Activated B cell treated with CpG ODN at 0.5 μM for 24 hours (primary cell): ENCODE measurements at regions of chr1 and their contacts with region 1.

Region 1: DNA sequence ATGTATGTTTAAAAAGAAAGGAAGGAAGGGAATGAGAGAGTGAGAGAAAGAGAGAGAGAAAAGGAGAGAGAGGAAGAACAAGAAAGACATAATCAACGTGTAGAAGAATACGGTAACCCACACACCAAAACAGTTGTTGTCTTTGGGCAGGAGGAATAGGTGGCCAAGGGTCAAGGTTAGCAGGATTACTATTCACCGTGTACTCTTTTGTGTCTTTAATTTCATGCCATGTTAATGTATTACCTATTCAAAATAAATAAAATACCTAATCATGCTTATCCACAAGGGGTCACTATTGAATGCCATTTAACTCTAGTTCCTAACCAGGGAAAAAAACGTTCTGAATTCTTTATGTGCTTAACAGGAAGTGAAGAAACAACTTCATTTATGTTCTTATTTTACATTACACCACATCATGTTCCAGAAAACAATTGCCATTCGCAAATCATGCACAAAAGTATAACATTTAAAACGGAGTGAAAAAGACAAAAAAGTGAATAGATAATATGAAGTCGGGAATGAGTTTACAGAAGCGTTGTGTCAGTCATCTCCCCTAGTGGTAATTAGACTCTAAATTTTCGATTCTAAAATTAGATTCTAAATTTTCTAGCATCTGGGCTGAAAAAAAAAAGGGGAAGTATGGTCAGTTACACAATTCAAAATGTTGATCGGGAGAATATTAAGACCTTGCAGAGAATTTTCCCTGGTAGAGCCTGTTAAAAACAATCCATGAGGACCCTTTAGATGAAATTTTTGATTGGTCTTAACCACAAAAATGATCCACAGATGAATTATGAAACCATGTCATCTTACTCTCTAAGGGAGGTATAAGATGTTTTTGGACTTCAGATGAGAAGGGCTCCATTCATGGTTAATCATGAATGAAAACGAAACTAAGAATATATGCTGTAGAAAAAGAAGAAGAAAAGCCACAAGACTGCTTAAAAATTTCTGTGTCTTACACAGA is 700 bp upstream of the KMO start:
- DNase-seq: no peak
- ATAC-seq: peak; percentile 66
- H3K4me3 Mint-ChIP-seq: peak overlapping the region; percentile 91
- H3K27ac Mint-ChIP-seq: peak overlapping the region; percentile 98
- H3K4me1 Mint-ChIP-seq: peaks cover 43% of the 10 kb centered on the region
- H3K27me3 Mint-ChIP-seq: no peaks in the 10 kb centered on the region
- CTCF ChIP-seq: no peak

Region 2: DNA sequence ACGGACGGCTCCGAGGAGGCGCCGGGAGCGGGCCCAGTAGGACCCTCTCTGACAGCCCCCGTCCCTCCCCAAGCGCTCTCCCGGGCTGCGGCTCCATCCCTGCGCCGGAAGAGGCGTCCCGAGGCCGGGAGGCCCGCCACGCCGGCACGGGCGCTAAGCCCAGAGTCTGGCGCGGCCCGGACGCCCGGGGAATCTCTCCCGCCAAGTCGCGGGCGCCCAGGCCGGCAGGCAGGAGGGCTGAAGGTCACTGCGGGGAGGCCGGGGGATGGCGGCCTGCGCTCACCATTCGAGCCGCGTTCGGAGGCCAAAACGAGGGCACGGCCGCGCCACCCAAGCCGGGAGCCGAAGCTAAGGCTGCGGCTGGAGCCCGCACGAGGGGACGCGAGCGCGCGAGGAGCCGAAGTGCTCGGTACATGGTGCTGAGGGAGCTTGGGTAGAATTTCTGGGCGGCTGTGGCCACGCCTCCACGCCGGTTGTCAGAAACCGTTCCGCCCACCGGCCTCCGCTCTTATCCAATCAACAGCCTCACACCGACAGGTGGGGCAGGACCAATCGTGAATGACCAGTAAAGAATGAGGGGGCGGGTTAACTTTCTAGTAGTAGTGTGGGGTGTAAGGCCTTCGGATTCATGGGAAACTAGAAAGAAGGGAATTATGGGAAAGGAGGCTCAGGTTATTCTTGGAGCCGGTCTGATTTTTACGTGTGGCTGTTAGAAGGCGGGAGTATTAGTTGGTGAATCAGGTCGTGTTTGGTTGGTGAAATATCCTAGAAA is 12.0 kb before region 1 on chr1 and contains the start of gene FH:
- CTCF ChIA-PET with region 1: interaction called, 3 read pairs
- POLR2A ChIA-PET with region 1: interaction called, 5 read pairs
- intact Hi-C with region 1: loop called (anchors 1 kb)
- DNase-seq: peak; percentile 87
- ATAC-seq: peak; percentile 98
- H3K4me3 Mint-ChIP-seq: peak within 1 kb of the TSS; percentile 91
- H3K27ac Mint-ChIP-seq: peak within 1 kb of the TSS; percentile 72
- H3K4me1 Mint-ChIP-seq: peaks cover 21% of the 10 kb centered on the region
- H3K27me3 Mint-ChIP-seq: no peaks in the 10 kb centered on the region
- CTCF ChIP-seq: no peak
- total RNA-seq, gene FH: 56.0 and 58.3 TPM in 2 replicates

Region 3: DNA sequence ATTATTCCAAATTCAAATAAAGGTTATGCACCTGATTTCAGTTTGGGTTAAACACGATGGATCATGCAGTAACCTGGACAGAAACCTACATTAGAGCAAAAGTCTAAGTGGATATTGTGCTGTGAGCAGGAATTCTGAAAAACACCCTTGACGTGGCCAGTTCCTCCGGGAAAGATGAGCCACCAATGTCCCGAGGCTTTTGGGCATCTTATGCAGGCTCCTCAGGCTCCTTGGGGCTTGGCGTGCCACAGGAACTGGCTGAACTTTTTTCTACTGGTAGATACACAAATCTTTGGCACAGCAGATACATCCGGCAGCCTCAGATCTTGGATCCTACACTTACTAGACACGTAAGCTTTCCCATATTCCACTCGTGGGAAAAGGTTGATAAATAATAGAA is 35.2 kb after region 1 on chr1:
- CTCF ChIA-PET with region 1: no interaction called
- POLR2A ChIA-PET with region 1: no interaction called
- intact Hi-C with region 1: loop called (anchors 5 kb)
- DNase-seq: no peak
- ATAC-seq: no peak
- H3K4me3 Mint-ChIP-seq: no peak overlapping the region
- H3K27ac Mint-ChIP-seq: no peak overlapping the region
- H3K4me1 Mint-ChIP-seq: peaks cover 14% of the 10 kb centered on the region
- H3K27me3 Mint-ChIP-seq: no peaks in the 10 kb centered on the region
- CTCF ChIP-seq: no peak

Region 4: GRCh38 chr1:241627453-241628259 is 96.2 kb after region 1 on chr1:
- CTCF ChIA-PET with region 1: interaction called, 9 read pairs
- POLR2A ChIA-PET with region 1: interaction called, 12 read pairs
- intact Hi-C with region 1: loop called (anchors 1 kb)
- DNase-seq: no peak
- ATAC-seq: peak; percentile 83
- H3K4me3 Mint-ChIP-seq: peak overlapping the region; percentile 66
- H3K27ac Mint-ChIP-seq: peak overlapping the region; percentile 86
- H3K4me1 Mint-ChIP-seq: peaks cover 48% of the 10 kb centered on the region
- H3K27me3 Mint-ChIP-seq: no peaks in the 10 kb centered on the region
- CTCF ChIP-seq: peak; percentile 17

Region 5: GRCh38 chr1:241847796-241848685 is 316.6 kb after region 1 on chr1 and contains the start of gene EXO1:
- CTCF ChIA-PET with region 1: no interaction called
- POLR2A ChIA-PET with region 1: no interaction called
- intact Hi-C with region 1: loop called (anchors 1 kb)
- DNase-seq: peak; percentile 91
- ATAC-seq: peak; percentile 98
- H3K4me3 Mint-ChIP-seq: peak within 1 kb of the TSS; percentile 100
- H3K27ac Mint-ChIP-seq: peak within 1 kb of the TSS; percentile 99
- H3K4me1 Mint-ChIP-seq: peaks cover 15% of the 10 kb centered on the region
- H3K27me3 Mint-ChIP-seq: no peaks in the 10 kb centered on the region
- CTCF ChIP-seq: no peak
- total RNA-seq, gene EXO1: 2.3 TPM in 2 replicates

Region 6: DNA sequence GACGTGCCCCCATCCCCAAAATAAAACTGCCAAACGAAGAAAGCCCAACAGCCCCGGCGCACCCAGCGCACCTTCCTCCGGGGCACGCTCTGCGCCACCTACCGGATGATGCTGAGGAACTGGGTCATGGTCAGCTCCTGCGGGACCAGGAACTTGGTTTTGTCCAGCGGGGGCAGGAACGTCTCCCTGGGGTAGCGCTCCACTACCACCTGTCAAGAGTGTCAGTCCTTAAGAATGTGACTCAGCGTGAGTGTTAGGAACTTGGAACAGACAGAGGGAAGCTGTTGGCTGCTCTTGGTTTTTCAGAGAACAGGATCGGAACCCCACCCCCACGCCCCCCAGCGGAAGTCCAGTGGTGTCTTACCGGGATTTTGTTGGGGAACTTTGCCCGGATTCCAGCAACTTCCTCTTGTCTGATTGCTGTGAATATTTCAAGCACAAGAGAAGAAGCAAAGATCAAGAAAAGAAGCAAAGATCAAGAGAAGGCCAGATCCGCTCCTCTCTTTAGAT is 467.0 kb after region 1 on chr1:
- CTCF ChIA-PET with region 1: interaction called, 3 read pairs
- POLR2A ChIA-PET with region 1: no interaction called
- intact Hi-C with region 1: loop called (anchors 1 kb)
- DNase-seq: peak; percentile 52
- ATAC-seq: peak; percentile 88
- H3K4me3 Mint-ChIP-seq: peak overlapping the region; percentile 80
- H3K27ac Mint-ChIP-seq: no peak overlapping the region
- H3K4me1 Mint-ChIP-seq: peaks cover 5% of the 10 kb centered on the region
- H3K27me3 Mint-ChIP-seq: peaks cover 5% of the 10 kb centered on the region
- CTCF ChIP-seq: no peak

Region 7: GRCh38 chr1:242784074-242784473 is 1252.6 kb after region 1 on chr1:
- CTCF ChIA-PET with region 1: no interaction called
- POLR2A ChIA-PET with region 1: interaction called, 3 read pairs
- intact Hi-C with region 1: loop called (anchors 10 kb)
- DNase-seq: no peak
- ATAC-seq: peak; percentile 80
- H3K4me3 Mint-ChIP-seq: peak overlapping the region; percentile 61
- H3K27ac Mint-ChIP-seq: peak overlapping the region; percentile 94
- H3K4me1 Mint-ChIP-seq: peaks cover 66% of the 10 kb centered on the region
- H3K27me3 Mint-ChIP-seq: no peaks in the 10 kb centered on the region
- CTCF ChIP-seq: no peak